Psoas muscle (tissue), 8 donors: ENCODE measurements at regions of chr1 and their contacts with region 1.

Region 1: DNA sequence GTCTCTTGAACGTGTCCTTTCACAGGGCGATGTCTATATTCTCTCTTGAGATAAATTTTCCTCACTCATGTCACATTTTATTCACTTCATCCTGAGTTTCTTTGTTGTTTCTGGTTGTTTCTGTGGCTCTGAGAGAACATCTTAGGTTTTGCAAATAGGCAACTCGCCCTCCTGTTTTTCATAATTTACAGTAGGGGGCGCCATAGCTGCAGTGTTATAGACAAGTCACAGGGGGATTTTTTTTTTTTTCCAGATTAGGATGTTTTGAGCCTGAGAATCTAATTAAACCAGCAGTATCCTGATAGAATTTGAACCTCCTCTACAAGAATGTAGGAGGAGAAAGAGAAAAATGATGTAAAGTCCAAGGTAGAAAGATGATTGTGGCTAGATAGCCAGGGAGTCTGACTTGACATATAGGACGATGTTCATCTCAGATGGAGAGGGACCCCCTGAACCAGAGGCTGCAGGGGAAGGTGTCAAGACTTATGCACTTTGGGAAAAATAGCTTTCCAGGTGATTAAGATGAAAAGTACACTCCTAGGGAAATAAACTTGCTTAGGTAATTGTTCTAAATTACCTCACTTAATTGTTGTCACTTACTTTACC is 76.3 kb downstream of the ZP4 start:
- DNase-seq: no peak
- ATAC-seq: no peak
- H3K4me3 ChIP-seq: no peak overlapping the region
- H3K27ac ChIP-seq: no peak overlapping the region
- H3K4me1 ChIP-seq: no peaks in the 10 kb centered on the region
- H3K27me3 ChIP-seq: no peaks in the 10 kb centered on the region
- CTCF ChIP-seq: no peak

Region 2: GRCh38 chr1:237786066-237786719 is 28.2 kb before region 1 on chr1:
- intact Hi-C with region 1: loop called in 1 of 2 experiments (anchors 1 kb)
- DNase-seq: no peak
- ATAC-seq: no peak
- H3K4me3 ChIP-seq: no peak overlapping the region
- H3K27ac ChIP-seq: no peak overlapping the region
- H3K4me1 ChIP-seq: no peaks in the 10 kb centered on the region
- H3K27me3 ChIP-seq: no peaks in the 10 kb centered on the region
- CTCF ChIP-seq: no peak